Activated CD4-positive, alpha-beta memory T cell treated with anti-CD3 and anti-CD28 coated beads, Interleukin-2, amount 10 ng/mL, durations not matched to agents 7 days and 5 days (primary cell): ENCODE measurements at regions of chr19 and their contacts with region 1.

Region 1: DNA sequence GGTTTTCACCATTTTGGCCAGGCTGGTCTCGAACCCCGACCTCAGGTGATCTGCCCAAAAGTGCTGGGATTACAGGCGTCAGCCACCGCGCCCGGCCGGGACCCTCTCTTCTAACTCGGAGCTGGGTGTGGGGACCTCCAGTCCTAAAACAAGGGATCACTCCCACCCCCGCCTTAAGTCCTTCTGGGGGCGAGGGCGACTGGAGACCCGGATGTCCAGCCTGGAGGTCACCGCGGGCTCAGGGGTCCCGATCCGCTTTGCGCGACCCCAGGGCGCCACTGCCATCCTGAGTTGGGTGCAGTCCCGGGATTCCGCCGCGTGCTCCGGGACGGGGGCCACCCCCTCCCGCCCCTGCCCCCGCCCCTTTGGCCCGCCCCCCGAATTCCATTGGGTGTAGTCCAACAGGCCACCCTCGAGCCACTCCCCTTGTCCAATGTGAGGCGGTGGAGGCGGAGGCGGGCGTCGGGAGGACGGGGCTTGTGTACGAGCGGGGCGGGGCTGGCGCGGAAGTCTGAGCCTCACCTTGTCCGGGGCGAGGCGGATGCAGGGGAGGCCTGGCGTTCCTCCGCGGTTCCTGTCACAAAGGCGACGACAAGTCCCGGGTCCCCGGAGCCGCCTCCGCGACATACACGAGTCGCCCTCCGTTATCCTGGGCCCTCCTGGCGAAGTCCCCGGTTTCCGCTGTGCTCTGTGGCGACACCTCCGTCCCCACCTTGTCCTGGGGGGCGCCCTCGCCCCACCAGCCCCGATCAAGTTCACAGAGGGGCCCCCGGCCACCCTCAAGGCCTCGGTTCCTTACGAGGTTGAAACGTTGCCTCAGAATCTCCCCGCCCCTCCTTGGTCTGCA is 1.0 kb downstream of the LDLR start:
- DNase-seq: peak; percentile 98
- H3K4me3 Mint-ChIP-seq: peak overlapping the region; percentile 96
- H3K27ac Mint-ChIP-seq: peak overlapping the region; percentile 99
- H3K4me1 Mint-ChIP-seq: peaks cover 46% of the 10 kb centered on the region
- H3K27me3 Mint-ChIP-seq: no peaks in the 10 kb centered on the region

Region 2: GRCh38 chr19:10896580-10897526 is 193.4 kb before region 1 on chr19:
- CTCF ChIA-PET with region 1: no interaction called
- POLR2A ChIA-PET with region 1: no interaction called
- DNase-seq: peak; percentile 22
- H3K4me3 Mint-ChIP-seq: no peak overlapping the region
- H3K27ac Mint-ChIP-seq: peak overlapping the region; percentile 44
- H3K4me1 Mint-ChIP-seq: peaks cover 13% of the 10 kb centered on the region
- H3K27me3 Mint-ChIP-seq: no peaks in the 10 kb centered on the region

Region 3: DNA sequence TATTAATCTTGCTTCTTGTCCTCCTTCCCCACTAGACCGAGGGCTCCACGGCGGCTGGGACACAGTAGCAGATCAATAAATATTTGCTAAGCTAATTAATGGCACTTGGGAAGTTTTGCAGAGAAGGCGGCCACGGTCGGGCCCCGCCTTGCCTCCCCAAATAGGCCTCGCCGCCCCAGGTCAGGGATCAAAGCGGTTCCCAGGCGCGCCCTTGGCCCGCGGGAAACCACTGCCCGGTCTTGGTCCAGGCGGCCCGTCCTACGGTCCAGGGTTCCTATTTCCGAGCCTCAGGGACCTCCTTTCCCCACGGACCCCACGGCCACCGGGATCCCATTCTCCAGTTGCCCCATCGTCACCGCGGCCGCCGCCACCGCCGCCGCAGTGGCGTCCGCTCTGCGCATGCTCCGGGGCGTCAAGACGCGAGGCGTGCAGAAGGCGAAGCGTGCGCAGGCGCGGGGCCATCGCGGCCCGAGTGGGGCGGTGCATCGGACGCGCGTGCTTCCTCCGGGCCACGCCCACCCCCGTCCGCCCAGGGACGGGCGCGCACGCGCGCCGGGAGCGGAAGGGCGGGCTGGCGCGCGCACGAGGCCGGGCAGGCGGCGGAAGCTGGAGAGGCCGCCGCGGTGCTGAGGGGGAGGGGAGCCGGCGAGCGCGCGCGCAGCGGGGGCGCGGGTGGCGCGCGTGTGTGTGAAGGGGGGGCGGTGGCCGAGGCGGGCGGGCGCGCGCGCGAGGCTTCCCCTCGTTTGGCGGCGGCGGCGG is 129.8 kb before region 1 on chr19 and contains the start of gene SMARCA4:
- CTCF ChIA-PET with region 1: no interaction called
- POLR2A ChIA-PET with region 1: interaction called, 12 read pairs
- DNase-seq: peak; percentile 99
- H3K4me3 Mint-ChIP-seq: peak within 1 kb of the TSS; percentile 87
- H3K27ac Mint-ChIP-seq: peak within 1 kb of the TSS; percentile 87
- H3K4me1 Mint-ChIP-seq: peaks cover 43% of the 10 kb centered on the region
- H3K27me3 Mint-ChIP-seq: no peaks in the 10 kb centered on the region
- total RNA-seq, gene SMARCA4: 89.8 to 97.6 TPM

Region 4: GRCh38 chr19:10998045-10998533 is 92.2 kb before region 1 on chr19:
- CTCF ChIA-PET with region 1: no interaction called
- POLR2A ChIA-PET with region 1: no interaction called
- DNase-seq: no peak
- H3K4me3 Mint-ChIP-seq: no peak overlapping the region
- H3K27ac Mint-ChIP-seq: no peak overlapping the region
- H3K4me1 Mint-ChIP-seq: no peaks in the 10 kb centered on the region
- H3K27me3 Mint-ChIP-seq: no peaks in the 10 kb centered on the region

Region 5: DNA sequence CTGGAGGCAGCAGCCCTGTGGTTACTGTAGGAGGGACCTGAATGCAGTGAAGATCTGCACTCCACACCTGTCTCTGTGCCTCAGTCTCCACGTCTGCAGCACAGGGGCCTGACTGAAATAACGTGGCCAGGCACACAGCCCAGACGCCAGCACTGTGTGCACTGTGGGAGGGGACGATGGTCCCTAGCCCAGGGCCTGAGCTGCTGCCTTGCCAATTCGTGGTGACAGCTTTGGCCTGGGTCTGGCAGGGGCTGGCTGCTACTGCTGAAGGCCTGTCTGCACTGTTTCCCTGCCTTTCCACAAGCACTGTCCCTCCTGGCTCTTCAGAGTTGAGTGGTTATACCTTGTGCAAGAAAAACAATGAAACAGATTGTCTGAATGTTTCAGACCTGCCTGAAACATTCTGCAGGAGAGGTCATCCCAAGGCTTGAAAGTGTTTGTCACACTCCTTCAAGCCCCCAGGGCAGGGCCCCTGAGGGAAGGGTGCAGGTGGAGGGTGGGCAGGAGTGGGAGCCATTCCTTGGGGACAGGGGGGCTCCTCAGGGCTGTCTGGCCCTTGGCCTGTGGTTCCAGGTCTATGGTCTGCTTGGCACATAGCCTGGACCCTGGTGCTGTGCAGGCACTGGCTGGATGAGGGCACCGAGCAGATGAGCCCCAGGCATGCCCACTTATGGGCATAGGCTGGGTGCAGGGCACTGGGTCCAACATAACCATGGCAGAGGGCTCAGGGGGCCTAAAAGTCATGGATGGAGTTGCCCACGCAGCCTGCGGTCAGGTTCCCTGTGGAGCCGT is 39.8 kb before region 1 on chr19:
- CTCF ChIA-PET with region 1: interaction called, 4 read pairs
- POLR2A ChIA-PET with region 1: interaction called, 22 read pairs
- DNase-seq: no peak
- H3K4me3 Mint-ChIP-seq: no peak overlapping the region
- H3K27ac Mint-ChIP-seq: no peak overlapping the region
- H3K4me1 Mint-ChIP-seq: peaks cover 32% of the 10 kb centered on the region
- H3K27me3 Mint-ChIP-seq: no peaks in the 10 kb centered on the region